Lower lobe of right lung (tissue), 2 donors: ENCODE measurements at regions of chr1 and their contacts with region 1.

Region 1: DNA sequence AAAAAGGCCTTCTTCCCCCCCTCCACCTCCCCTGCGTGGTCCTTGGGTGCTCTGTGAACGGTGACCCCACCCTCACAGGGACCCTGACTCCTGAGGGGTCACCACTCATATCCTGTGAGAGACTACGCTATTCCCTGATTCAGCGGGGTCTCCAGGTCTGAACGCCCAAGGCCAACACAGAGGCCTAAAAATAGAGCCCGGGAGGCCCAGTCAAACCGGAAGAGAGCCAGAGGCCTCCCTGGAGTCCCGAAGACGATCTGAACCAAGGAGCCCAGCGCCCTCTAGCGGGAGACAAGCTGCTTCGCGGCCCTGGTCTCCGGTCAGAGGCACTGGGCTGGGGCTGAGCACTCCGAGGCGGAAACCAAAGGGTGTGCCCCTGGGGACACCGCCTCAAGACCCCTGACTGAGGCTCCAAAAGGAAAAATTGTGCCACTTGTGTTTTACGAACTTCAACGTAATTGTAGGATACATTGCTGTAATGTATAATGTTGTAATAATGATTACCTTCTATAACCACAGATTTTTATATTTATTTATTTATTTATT is 42.4 kb upstream of the PSEN2 start:
- DNase-seq: peak; percentile 96
- ATAC-seq: peak; percentile 98 to 99
- H3K4me3 ChIP-seq: peak overlapping the region; percentile 28
- H3K27ac ChIP-seq: peak overlapping the region; percentile 76
- H3K4me1 ChIP-seq: peaks cover 14% of the 10 kb centered on the region
- H3K27me3 ChIP-seq: no peaks in the 10 kb centered on the region
- CTCF ChIP-seq: peak; percentile 99

Region 2: GRCh38 chr1:226634166-226634588 is 193.9 kb before region 1 on chr1:
- intact Hi-C with region 1: loop called (anchors 5 kb)
- DNase-seq: peak; percentile 87
- ATAC-seq: peak; percentile 84 to 89
- H3K4me3 ChIP-seq: no peak overlapping the region
- H3K27ac ChIP-seq: peak overlapping the region; percentile 47
- H3K4me1 ChIP-seq: peaks cover 23% of the 10 kb centered on the region
- H3K27me3 ChIP-seq: no peaks in the 10 kb centered on the region
- CTCF ChIP-seq: peak; percentile 96

Region 3: DNA sequence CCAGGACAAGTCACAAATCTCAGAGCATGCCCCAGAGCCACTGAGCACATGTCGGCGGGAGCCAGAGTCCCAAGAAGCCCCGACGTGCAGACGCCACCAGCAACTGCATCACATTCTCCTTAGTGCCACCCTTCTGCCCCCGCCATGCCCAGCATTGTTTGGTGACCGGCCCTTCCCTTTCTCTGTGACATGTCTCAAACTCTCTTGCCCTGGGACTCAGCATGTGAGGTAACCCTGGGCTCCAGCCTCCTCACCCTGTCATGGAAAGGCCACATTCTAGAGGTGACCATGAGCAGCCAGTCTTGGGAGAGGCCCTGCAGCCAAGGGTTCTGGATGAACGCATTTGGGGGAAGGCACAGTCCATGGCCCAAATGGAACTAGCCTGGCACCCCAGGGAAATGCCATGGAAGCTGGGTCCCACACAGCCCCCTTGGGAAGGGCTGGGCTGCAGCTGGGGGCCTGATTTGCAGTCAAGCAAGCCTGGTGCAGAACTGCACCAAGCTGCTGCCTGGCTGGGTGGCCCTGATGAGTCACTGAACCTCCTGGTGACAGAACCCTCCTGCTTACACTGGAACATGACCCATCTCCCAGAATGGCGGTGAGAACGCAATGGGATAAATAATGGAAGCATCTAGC is 183.4 kb before region 1 on chr1:
- intact Hi-C with region 1: no loop called
- DNase-seq: peak; percentile 17
- ATAC-seq: no peak
- H3K4me3 ChIP-seq: no peak overlapping the region
- H3K27ac ChIP-seq: no peak overlapping the region
- H3K4me1 ChIP-seq: peaks cover 25% of the 10 kb centered on the region
- H3K27me3 ChIP-seq: no peaks in the 10 kb centered on the region
- CTCF ChIP-seq: no peak

Region 4: GRCh38 chr1:226702957-226703831 is 124.8 kb before region 1 on chr1:
- intact Hi-C with region 1: loop called (anchors 10 kb)
- DNase-seq: peak; percentile 84
- ATAC-seq: peak; percentile 95 to 97
- H3K4me3 ChIP-seq: peak overlapping the region; percentile 74
- H3K27ac ChIP-seq: peak overlapping the region; percentile 98
- H3K4me1 ChIP-seq: peaks cover 33% of the 10 kb centered on the region
- H3K27me3 ChIP-seq: no peaks in the 10 kb centered on the region
- CTCF ChIP-seq: no peak

Region 5: DNA sequence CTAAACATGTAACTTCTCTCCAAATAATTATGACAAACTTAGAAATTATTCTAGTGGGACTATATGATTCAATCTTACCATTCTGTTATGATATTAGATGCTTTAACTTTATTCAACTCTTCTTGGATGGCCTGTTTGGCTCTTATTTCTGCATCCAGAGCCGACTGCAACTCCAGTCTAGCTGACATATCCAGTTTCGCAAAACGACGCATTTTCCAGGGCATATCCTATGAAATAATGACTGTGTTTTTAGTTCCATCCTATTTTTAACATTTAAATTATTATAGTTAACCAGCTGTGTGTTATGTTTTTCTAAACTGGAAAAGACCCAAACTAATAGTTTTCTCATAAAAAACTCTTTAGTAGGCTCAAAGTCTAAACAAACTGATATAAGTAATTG is 245.7 kb after region 1 on chr1:
- intact Hi-C with region 1: no loop called
- DNase-seq: no peak
- ATAC-seq: no peak
- H3K4me3 ChIP-seq: no peak overlapping the region
- H3K27ac ChIP-seq: no peak overlapping the region
- H3K4me1 ChIP-seq: no peaks in the 10 kb centered on the region
- H3K27me3 ChIP-seq: no peaks in the 10 kb centered on the region
- CTCF ChIP-seq: no peak